H1 (cell line): ENCODE measurements at regions of chr11 and their contacts with region 1.

Region 1: GRCh38 chr11:119334174-119334930 is at the start of gene RNF26:
- DNase-seq: peak; percentile 95 to 98
- H3K4me3 ChIP-seq: peak within 1 kb of the TSS; percentile 92 to 96 (median 96)
- H3K27ac ChIP-seq: peak within 1 kb of the TSS; percentile 89
- H3K4me1 ChIP-seq: peaks cover 4 to 24% (median 18%) of the 10 kb centered on the region in 4 experiments
- H3K27me3 ChIP-seq: peaks cover 3 to 8% (median 6%) of the 10 kb centered on the region in 4 experiments; a peak in 6 of 7 replicates
- CTCF ChIP-seq: no peak
- EP300 ChIP-seq: no peak
- POLR2A ChIP-seq: peak in 1 of 2 experiments; percentile 88; a peak in 2 of 3 replicates
- RAD21 ChIP-seq: no peak
- total RNA-seq, gene RNF26: 82.7 and 86.6 TPM in 2 replicates

Region 2: DNA sequence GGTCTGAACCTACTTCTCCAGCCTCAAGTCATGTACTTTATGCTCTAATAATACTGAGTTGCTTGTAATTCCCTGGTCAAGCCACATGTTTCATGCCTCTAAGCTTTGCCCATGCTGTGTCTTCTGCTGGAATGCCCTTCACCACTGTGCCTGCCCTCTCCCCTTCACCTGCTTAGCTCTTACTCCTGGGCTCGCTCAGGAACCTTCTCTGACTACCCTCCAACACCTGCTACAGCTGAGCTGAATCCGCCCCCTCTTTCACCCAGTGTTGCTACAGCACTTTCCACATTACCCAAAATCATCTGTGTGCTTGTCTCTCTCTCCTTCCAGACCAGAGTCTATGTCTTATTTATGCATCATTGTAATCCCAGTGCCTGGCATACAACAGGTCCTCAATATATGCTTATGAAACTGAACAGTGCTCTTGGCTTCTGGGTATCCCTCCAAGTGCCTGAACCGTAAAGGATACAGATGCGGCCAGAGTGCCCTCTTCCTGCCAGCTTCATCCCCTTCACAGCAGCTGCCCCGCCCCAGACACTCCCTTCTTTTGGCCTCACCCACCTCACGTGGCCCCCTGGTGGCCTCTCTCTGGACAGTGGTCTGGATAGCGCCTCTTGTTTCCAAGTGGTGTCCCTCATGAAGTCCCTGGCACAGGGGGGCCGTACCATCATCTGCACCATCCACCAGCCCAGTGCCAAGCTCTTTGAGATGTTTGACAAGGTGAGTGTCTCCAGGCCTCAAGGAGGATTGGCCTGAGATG is 178.4 kb before region 1 on chr11:
- CTCF ChIA-PET with region 1: interaction called, 20 read pairs
- POLR2A ChIA-PET with region 1: no interaction called
- DNase-seq: peak in 1 of 2 experiments; percentile 62
- H3K4me3 ChIP-seq: no peak overlapping the region
- H3K27ac ChIP-seq: no peak overlapping the region
- H3K4me1 ChIP-seq: peaks cover 0 to 5% (median 2%) of the 10 kb centered on the region in 4 experiments; a peak in 4 of 7 replicates
- H3K27me3 ChIP-seq: peaks cover 0 to 4% (median 3%) of the 10 kb centered on the region in 4 experiments; a peak in 5 of 7 replicates
- CTCF ChIP-seq: peak; percentile 29 to 48 (median 33)
- EP300 ChIP-seq: no peak
- POLR2A ChIP-seq: no peak
- RAD21 ChIP-seq: peak; percentile 10 to 14; a peak in 1 of 4 replicates

Region 3: GRCh38 chr11:119306373-119306890 is 27.9 kb before region 1 on chr11:
- CTCF ChIA-PET with region 1: interaction called, 17 read pairs
- POLR2A ChIA-PET with region 1: interaction called, 4 read pairs
- DNase-seq: no peak
- H3K4me3 ChIP-seq: no peak overlapping the region
- H3K27ac ChIP-seq: no peak overlapping the region; the same call in 1 of the 2 replicates
- H3K4me1 ChIP-seq: no peaks in the 10 kb centered on the region
- H3K27me3 ChIP-seq: no peaks in the 10 kb centered on the region
- CTCF ChIP-seq: no peak
- EP300 ChIP-seq: no peak
- POLR2A ChIP-seq: no peak
- RAD21 ChIP-seq: no peak